Mammary epithelial cell (primary cell): ENCODE measurements at regions of chr18 and their contacts with region 1.

Region 1: DNA sequence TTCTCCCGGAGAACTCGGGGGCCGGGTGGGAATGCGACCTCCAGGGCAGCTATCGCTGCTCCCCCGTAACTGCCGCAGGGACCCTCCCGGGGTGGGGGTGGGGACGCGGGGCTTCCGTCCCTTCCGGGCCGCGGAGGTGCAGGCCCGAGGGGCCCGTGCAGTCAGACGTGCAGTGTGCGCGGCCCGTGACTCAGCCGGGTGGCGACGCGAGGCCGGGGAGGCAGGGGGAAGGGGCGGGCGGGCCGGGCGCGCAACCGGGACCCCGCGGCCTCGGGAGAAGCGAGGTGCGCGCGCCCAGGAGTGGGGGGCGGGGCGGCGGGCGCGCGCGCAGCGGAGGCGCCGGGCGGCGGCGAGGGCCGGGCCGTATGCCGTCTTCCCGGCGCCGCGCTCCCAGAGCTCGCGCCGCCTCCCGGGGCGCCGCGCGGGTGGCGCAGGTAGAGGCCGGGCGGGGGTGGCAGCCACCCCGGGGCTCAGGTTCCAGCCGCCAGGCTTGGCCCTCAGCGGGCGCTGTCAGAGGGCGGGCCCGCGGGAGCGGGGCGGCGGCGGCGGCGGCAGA is 25.0 kb upstream of the SMAD7 start:
- DNase-seq: peak; percentile 55
- H3K4me3 ChIP-seq: peak overlapping the region; percentile 25 to 56 (median 56)
- H3K27ac ChIP-seq: peak overlapping the region; percentile 6
- H3K4me1 ChIP-seq: peaks cover 18% of the 10 kb centered on the region
- H3K27me3 ChIP-seq: no peaks in the 10 kb centered on the region
- CTCF ChIP-seq: no peak

Region 2: GRCh38 chr18:48992699-48993555 is 17.2 kb after region 1 on chr18:
- CTCF ChIA-PET with region 1: no interaction called
- dilution Hi-C with region 1: no loop called
- in situ Hi-C with region 1: no loop called
- intact Hi-C with region 1: loop called (anchors 2 kb)
- DNase-seq: no peak
- H3K4me3 ChIP-seq: no peak overlapping the region
- H3K27ac ChIP-seq: no peak overlapping the region
- H3K4me1 ChIP-seq: peaks cover 31% of the 10 kb centered on the region
- H3K27me3 ChIP-seq: no peaks in the 10 kb centered on the region
- CTCF ChIP-seq: no peak